Activated CD8-positive, alpha-beta T cell treated with anti-CD3 and anti-CD28 coated beads for 36 hours (primary cell): ENCODE measurements at regions of chr1 and their contacts with region 1.

Region 1: DNA sequence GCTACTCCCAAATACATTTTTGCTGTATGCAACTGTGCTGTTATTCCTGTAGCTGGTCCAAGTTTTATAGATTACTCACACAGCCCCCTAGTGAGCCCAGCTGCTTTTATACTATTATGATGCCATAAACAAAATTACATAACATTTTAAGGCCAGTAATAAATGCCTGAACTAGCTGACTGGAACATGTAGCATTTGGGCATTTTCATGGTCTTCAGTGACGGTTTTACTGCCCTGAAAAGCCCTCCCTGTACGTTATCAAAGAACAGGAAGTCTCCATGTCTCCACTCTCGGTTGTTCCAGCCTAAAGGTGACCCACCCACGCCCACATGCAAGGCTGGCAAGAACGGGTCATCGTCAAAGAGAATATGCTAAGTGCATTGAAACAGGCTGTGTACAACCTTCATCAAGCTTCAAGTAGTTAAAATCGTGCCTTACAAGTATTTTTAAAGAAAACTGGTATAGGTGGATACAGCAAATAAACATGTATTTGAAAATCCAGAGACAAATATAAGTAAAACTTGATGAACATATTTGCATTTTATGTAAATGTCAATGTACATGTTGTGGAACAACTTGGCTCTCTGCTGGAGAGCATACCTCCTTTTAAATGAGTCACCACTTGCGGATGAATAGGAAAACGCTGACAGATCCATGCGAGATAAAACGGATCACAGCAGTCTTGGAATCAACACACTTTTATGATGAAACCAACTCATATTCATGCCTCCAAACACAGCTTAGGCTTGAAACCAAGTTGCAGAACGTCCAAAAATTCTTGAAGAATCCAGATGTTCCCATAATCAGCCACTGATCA is 520.5 kb downstream of the SMYD3 start:
- DNase-seq: peak; percentile 8
- ATAC-seq: no peak
- H3K4me3 Mint-ChIP-seq: no peak overlapping the region
- H3K27ac Mint-ChIP-seq: no peak overlapping the region
- H3K4me1 Mint-ChIP-seq: peaks cover 2% of the 10 kb centered on the region
- H3K27me3 Mint-ChIP-seq: no peaks in the 10 kb centered on the region
- CTCF ChIP-seq: no peak

Region 2: DNA sequence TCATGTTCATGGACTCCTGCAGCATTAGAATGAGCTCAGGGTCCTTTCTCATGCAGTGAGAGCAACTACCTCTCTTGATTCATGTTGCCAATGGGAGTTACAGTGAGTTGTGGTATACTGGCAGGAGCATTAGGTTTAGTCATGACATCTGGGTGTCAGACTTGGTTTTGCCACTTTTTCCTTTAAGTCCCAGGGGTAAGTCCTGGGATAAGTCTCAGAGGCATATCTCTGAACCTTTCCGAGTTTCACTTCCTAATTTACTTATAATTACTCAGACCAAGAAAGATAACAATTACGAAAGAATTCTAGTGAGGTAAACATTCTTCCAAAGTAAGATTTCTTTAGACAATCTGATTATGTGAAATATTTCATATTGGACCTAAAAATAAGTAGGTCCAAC is 85.6 kb before region 1 on chr1:
- CTCF ChIA-PET with region 1: no interaction called
- POLR2A ChIA-PET with region 1: no interaction called
- intact Hi-C with region 1: loop called (anchors 10 kb)
- DNase-seq: no peak
- ATAC-seq: no peak
- H3K4me3 Mint-ChIP-seq: no peak overlapping the region
- H3K27ac Mint-ChIP-seq: no peak overlapping the region
- H3K4me1 Mint-ChIP-seq: no peaks in the 10 kb centered on the region
- H3K27me3 Mint-ChIP-seq: no peaks in the 10 kb centered on the region
- CTCF ChIP-seq: no peak

Region 3: DNA sequence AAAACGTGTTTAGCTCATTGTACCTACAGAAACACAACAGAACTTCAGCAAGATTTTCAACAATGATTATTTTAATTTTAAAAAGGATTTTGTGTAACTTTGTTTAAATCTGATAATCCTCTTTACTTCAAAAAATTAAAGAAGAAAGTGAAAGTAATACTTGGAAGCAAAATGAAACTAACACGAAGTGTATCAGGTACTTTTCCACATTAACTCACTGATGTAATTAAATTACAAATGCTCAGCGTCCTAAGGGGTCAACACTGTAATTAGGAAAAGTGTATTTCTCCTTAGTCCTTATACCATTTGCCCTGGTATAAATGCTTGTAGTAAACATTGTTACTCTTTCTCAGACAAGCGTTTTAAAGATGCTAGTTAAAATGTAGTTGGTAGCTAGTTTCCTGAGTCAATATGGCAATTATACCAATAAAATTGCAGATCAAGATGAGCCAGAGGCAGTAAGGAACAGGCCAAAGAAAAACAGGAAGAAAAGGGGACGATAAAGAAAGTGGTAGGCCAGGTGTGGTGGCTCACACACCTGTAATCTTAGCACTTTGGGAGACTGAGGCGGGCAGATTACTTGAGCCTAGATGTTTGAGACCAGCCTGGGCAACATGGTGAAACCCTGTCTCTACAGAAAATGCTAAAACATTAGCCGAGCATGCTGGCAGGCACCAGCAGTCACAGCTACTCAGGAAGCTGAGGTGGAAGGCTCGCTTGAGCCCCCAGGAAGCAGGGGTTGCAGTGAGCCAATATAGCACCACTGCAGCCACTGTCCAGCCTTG is 32.5 kb before region 1 on chr1:
- CTCF ChIA-PET with region 1: no interaction called
- POLR2A ChIA-PET with region 1: no interaction called
- intact Hi-C with region 1: no loop called
- DNase-seq: peak; percentile 18
- ATAC-seq: peak; percentile 29
- H3K4me3 Mint-ChIP-seq: peak overlapping the region; percentile 73
- H3K27ac Mint-ChIP-seq: peak overlapping the region; percentile 99
- H3K4me1 Mint-ChIP-seq: peaks cover 20% of the 10 kb centered on the region
- H3K27me3 Mint-ChIP-seq: no peaks in the 10 kb centered on the region
- CTCF ChIP-seq: no peak